ENCODE measurements at regions of chr18 and their contacts with region 1.

Region 1: GRCh38 chr18:741931-742512 is 29.6 kb upstream of the ENOSF1 start:
- DNase-seq: no peak
- H3K4me3 ChIP-seq: no peak overlapping the region
- H3K27ac ChIP-seq: no peak overlapping the region
- H3K4me1 ChIP-seq: no peaks in the 10 kb centered on the region
- H3K27me3 ChIP-seq: no peaks in the 10 kb centered on the region
- CTCF ChIP-seq: peak; percentile 54 to 72 (median 66)
- EP300 ChIP-seq: no peak
- POLR2A ChIP-seq: no peak

Region 2: GRCh38 chr18:616380-616995 is 125.5 kb before region 1 on chr18:
- intact Hi-C with region 1: no loop called
- DNase-seq: no peak
- H3K4me3 ChIP-seq: no peak overlapping the region
- H3K27ac ChIP-seq: no peak overlapping the region
- H3K4me1 ChIP-seq: no peaks in the 10 kb centered on the region
- H3K27me3 ChIP-seq: no peaks in the 10 kb centered on the region
- CTCF ChIP-seq: peak; percentile 60 to 76 (median 66)
- EP300 ChIP-seq: no peak
- POLR2A ChIP-seq: no peak

Region 3: DNA sequence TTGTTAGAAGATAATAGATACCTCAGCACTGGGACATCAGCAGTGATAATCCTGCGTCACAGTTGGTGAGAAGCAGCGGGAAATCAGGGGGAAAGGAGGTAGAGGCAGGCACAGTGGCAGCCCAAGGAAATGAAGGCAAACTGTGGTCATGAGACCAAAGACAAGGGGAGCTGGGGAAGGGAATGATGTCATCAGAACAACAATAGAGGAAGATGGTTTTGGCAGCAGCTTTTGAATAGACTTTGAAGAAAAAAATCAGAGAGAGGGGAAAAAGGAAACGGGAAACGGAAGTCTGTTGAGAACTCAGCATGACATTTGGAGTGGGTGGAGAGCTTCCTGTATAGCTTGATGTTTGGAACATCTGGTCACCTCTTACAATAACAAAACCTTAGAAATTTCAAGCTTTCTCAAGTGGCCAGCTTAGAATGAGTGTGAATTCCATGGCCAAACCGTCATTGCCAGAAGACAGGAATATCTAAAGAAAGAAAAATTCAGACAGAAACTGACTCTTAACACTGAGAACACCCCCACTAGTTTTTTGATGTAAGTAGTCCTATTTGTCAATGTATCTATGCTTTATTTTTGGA is 88.4 kb after region 1 on chr18:
- intact Hi-C with region 1: loop called (anchors 1 kb)
- DNase-seq: no peak
- H3K4me3 ChIP-seq: no peak overlapping the region
- H3K27ac ChIP-seq: no peak overlapping the region
- H3K4me1 ChIP-seq: no peaks in the 10 kb centered on the region
- H3K27me3 ChIP-seq: peaks cover 0 to 12% (median 0%) of the 10 kb centered on the region in 3 donors
- CTCF ChIP-seq: no peak
- EP300 ChIP-seq: no peak
- POLR2A ChIP-seq: no peak

Region 4: GRCh38 chr18:903701-904100 is 161.7 kb after region 1 on chr18:
- intact Hi-C with region 1: no loop called
- DNase-seq: no peak
- H3K4me3 ChIP-seq: no peak overlapping the region
- H3K27ac ChIP-seq: no peak overlapping the region
- H3K4me1 ChIP-seq: peaks cover 0 to 44% (median 40%) of the 10 kb centered on the region in 4 donors
- H3K27me3 ChIP-seq: peaks cover 46 to 77% (median 71%) of the 10 kb centered on the region in 3 donors
- CTCF ChIP-seq: no peak
- EP300 ChIP-seq: no peak
- POLR2A ChIP-seq: no peak

Measured in sigmoid colon (tissue), 7 donors.